Gastrocnemius medialis (tissue), 4 donors: ENCODE measurements at regions of chr15 and their contacts with region 1.

Region 1: GRCh38 chr15:31934821-31935220 is 95.5 kb upstream of the CHRNA7 start:
- DNase-seq: no peak
- ATAC-seq: no peak
- H3K4me3 ChIP-seq: no peak overlapping the region
- H3K27ac ChIP-seq: no peak overlapping the region
- H3K4me1 ChIP-seq: no peaks in the 10 kb centered on the region
- H3K27me3 ChIP-seq: no peaks in the 10 kb centered on the region
- CTCF ChIP-seq: no peak
- POLR2A ChIP-seq: no peak

Region 2: DNA sequence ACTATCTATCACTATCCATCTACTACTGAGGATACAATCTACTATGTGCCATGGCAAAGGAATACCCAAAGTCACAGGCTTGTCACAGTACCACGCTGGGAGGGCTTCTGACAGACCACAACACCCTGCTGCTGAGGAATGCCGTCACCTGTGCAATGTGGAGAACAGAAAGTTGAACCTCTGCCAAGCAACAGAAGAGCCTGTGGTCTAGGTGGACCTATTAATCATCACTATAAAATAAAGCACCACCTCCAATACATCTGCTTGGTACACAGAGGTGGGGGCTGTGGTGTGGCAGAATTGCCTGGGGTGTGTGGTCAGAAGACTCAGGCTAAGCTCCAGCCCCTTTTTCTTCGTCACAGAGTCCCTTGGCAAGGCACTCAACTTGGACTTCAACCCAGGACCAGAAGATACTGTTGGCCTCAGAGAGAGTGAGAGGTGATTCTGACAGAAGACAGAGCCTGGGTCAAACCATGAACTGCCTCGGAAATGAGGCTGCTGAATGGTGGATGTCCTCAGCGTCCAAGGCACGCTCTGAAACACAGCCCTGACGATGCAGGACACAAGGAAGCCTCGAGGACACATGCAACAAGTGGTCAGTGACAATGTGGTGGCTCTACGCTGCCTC is 93.9 kb before region 1 on chr15:
- in situ Hi-C with region 1: loop called in 1 of 4 experiments (anchors 25 kb)
- intact Hi-C with region 1: no loop called
- DNase-seq: no peak
- ATAC-seq: no peak
- H3K4me3 ChIP-seq: no peak overlapping the region
- H3K27ac ChIP-seq: no peak overlapping the region
- H3K4me1 ChIP-seq: no peaks in the 10 kb centered on the region
- H3K27me3 ChIP-seq: no peaks in the 10 kb centered on the region
- CTCF ChIP-seq: no peak
- POLR2A ChIP-seq: no peak

Region 3: DNA sequence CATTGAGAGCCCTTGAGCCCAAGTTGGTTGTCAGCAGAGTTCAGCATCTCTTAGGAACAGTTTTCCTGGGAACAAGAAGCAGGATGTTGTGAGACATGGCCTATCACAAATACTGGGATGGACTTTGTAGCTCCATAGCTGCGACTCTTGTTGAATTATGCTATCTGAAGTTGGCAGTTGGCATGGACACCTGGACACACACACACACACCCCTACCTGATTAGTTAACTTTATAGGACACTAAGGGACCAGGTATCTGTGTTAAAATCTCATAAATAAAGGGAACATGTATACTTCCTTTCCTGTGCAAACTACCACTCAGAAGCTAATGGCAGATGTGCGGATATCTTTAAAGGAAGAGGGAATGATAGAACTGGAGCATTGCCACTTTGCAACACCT is 85.3 kb after region 1 on chr15:
- in situ Hi-C with region 1: no loop called
- intact Hi-C with region 1: no loop called
- DNase-seq: no peak
- ATAC-seq: no peak
- H3K4me3 ChIP-seq: no peak overlapping the region
- H3K27ac ChIP-seq: no peak overlapping the region
- H3K4me1 ChIP-seq: no peaks in the 10 kb centered on the region
- H3K27me3 ChIP-seq: no peaks in the 10 kb centered on the region
- CTCF ChIP-seq: no peak
- POLR2A ChIP-seq: no peak

Region 4: DNA sequence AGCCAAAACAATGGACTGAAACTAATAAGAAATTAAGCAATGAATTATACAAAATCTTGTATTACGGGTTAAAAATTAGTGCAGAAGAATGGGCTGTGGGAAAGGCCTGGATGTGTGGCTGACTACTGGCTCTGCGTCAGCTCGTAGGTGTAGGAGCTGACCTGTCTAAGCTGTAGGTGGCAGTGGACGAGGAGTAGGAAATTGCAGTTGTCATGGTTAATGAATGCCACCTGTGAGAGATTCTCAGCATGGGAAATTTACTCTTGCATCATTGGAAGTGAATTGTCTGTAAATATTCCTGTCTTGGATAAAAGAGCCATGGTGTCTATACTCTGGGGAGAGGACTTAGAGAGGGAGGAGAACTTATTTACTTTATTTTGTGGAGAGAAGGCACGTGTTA is 118.9 kb after region 1 on chr15:
- in situ Hi-C with region 1: no loop called
- intact Hi-C with region 1: no loop called
- DNase-seq: no peak
- ATAC-seq: no peak
- H3K4me3 ChIP-seq: no peak overlapping the region
- H3K27ac ChIP-seq: no peak overlapping the region
- H3K4me1 ChIP-seq: no peaks in the 10 kb centered on the region
- H3K27me3 ChIP-seq: no peaks in the 10 kb centered on the region
- CTCF ChIP-seq: no peak
- POLR2A ChIP-seq: no peak